A549 (cell line): ENCODE measurements at regions of chr1 and their contacts with region 1.

Region 1: GRCh38 chr1:78617615-78618026 is 2.6 kb upstream of the IFI44L start:
- DNase-seq: peak; percentile 13 to 74
- ATAC-seq: peak; percentile 81 to 89; a peak in 5 of 6 replicates
- H3K4me3 ChIP-seq: no peak overlapping the region
- H3K27ac ChIP-seq: no peak overlapping the region
- H3K4me1 ChIP-seq: peaks cover 3% of the 10 kb centered on the region; the same call in 1 of the 3 replicates
- CTCF ChIP-seq: peak; percentile 63
- EP300 ChIP-seq: no peak
- POLR2A ChIP-seq: no peak
- RAD21 ChIP-seq: peak; percentile 57 to 67

Region 2: GRCh38 chr1:78676347-78676982 is 58.8 kb after region 1 on chr1:
- CTCF ChIA-PET with region 1: interaction called, 14 read pairs
- POLR2A ChIA-PET with region 1: no interaction called
- DNase-seq: peak; percentile 12 to 59
- ATAC-seq: peak; percentile 59 to 66; a peak in 3 of 6 replicates
- H3K4me3 ChIP-seq: no peak overlapping the region
- H3K27ac ChIP-seq: no peak overlapping the region
- H3K4me1 ChIP-seq: no peaks in the 10 kb centered on the region
- CTCF ChIP-seq: peak; percentile 77
- EP300 ChIP-seq: no peak
- POLR2A ChIP-seq: no peak
- RAD21 ChIP-seq: peak; percentile 67 to 73

Region 3: DNA sequence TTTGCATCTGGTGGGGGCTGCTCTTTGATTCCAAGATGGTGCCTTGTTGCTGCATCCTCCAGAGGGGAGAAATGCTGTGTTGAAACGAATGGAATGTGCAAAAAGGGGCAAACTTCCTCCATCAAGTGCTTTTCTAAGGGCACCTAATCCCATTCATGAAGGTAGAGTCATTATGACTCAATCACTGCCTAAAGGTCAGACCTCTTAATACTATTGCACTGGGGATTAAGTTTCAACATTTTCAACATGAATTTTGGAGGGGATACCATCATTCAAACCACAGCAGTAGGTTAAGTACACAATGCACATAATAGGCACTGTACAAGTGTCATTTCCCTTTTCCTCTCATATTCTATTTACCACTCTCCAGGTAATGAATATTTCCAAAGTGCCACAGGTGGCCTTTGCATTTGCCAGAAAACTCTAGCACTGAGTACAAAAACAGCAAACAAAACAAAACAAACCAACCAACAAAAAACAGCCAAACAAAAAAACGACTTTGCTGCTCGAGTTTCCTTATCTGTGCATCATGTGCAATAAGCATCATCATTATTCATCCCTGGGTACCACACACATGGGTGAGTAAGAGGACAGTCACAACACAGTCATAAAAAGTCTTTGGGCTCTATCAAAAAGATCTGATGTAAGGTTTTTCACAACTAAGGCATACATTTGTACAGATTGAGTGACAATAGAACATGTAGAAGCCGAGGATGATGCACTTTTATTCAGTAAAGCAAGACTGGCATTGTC is 74.5 kb after region 1 on chr1:
- CTCF ChIA-PET with region 1: no interaction called
- POLR2A ChIA-PET with region 1: no interaction called
- DNase-seq: peak in 1 of 2 experiments; percentile 2
- ATAC-seq: peak in 1 of 2 experiments; percentile 70; a peak in 2 of 6 replicates
- H3K4me3 ChIP-seq: no peak overlapping the region
- H3K27ac ChIP-seq: peak overlapping the region in 1 of 2 experiments; percentile 66; a peak in 3 of 6 replicates
- H3K4me1 ChIP-seq: peaks cover 5% of the 10 kb centered on the region; the same call in 1 of the 3 replicates
- CTCF ChIP-seq: no peak
- EP300 ChIP-seq: no peak; a peak in 1 of 5 replicates
- POLR2A ChIP-seq: no peak
- RAD21 ChIP-seq: no peak